ENCODE measurements at regions of chr22 and their contacts with region 1.

Region 1: DNA sequence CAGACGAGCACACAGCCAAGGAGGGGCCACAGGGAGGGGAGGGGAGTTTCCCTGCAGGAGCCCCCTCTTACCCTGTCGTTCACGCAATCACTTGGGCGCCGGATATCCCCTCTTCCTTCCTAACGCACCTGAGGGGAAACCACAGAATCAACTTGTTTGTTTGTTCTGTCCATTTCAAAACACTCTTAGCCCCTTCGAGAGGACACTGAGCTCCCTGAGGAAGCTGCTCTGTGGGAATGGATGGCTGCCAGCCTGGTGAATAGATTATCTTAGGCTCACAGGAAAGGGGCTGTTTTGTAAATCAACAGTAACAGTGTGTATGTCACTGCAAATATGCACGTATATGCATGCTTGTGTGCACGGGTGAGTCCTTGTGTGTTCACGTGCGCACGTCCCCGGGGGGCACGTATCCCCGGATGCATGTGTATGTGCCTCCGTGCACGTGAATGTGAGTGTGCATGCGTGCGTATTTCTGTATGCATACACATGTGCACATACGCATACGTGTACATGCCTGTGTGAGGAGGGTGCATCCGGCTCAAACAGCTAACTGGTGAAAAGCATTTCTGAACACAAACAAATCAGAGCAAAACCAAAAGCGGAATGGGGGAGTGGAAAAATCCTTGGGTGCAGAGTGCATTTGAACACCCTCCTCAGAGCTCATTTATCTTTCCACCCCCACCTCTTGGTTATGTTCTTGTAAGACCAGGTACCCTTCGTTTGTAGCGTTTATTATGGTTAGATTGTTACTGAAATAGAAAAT is 7.2 kb downstream of the ARSA start:
- DNase-seq: peak; percentile 78 to 96 (median 94)
- ATAC-seq: peak; percentile 71 to 73
- H3K4me3 Mint-ChIP-seq: peak overlapping the region; percentile 88 to 95 (median 92)
- H3K27ac Mint-ChIP-seq: peak overlapping the region; percentile 94 to 100 (median 98)
- H3K4me1 Mint-ChIP-seq: peaks cover 17 to 41% (median 38%) of the 10 kb centered on the region in 4 donors
- H3K27me3 Mint-ChIP-seq: no peaks in the 10 kb centered on the region

Region 2: GRCh38 chr22:50190182-50190940 is 430.4 kb before region 1 on chr22:
- POLR2A ChIA-PET with region 1: interaction called, 11 read pairs
- DNase-seq: peak; percentile 72 to 93 (median 82)
- ATAC-seq: peak; percentile 51
- H3K4me3 Mint-ChIP-seq: peak overlapping the region; percentile 85 to 95 (median 90)
- H3K27ac Mint-ChIP-seq: peak overlapping the region; percentile 94 to 100 (median 100)
- H3K4me1 Mint-ChIP-seq: peaks cover 18 to 62% (median 51%) of the 10 kb centered on the region in 4 donors
- H3K27me3 Mint-ChIP-seq: no peaks in the 10 kb centered on the region

Region 3: GRCh38 chr22:50250555-50251476 is 370.0 kb before region 1 on chr22 and contains the start of gene HDAC10:
- POLR2A ChIA-PET with region 1: interaction called, 23 read pairs
- DNase-seq: peak; percentile 59 to 87 (median 71)
- ATAC-seq: peak; percentile 72 to 82
- H3K4me3 Mint-ChIP-seq: peak within 1 kb of the TSS; percentile 60 to 87 (median 77)
- H3K27ac Mint-ChIP-seq: peak within 1 kb of the TSS; percentile 23 to 83 (median 62)
- H3K4me1 Mint-ChIP-seq: peaks cover 0 to 25% (median 7%) of the 10 kb centered on the region in 4 donors
- H3K27me3 Mint-ChIP-seq: no peaks in the 10 kb centered on the region
- polyA plus RNA-seq, gene HDAC10: 5.4 to 7.8 (median 6.4) TPM

Region 4: DNA sequence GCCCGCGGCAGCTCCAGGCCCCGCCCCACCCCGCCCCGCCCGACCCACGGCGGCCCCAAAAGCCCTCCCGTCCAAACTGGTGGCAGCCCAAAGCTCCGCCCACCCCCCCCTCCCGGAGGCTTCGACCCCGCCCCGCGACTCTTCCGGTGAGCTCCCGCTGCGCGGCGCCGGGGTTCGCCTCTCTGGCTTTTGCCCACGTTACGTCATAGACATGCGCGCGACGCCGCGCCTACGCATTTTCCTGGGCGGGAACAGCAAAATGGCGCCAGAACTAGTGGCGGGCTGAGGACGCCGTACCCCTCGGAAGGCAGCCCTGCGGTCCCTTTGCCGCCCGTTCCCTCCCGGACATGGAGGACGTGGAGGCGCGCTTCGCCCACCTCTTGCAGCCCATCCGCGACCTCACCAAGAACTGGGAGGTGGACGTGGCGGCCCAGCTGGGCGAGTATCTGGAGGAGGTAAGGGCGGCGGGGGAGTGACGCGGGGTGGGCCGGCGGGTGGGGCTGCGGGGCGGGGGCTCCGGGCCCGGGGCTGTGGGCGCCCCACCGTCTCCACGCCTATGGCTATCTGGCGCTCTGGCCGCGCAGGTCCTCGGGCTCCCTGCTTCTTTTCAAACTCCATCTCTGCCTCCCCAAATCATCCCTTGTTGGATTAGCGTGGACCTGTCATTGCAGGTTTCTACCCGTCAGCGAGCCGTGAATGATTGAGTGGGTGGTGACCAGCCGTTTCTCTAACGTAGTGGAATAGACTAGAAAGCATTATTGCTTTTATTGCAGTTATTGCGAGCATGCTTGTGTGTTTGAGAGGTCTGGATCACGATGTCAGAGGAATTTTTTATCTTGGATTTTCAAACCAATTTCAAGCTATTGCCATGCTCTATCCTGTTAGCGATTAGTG is 112.5 kb before region 1 on chr22 and contains the start of gene NCAPH2:
- POLR2A ChIA-PET with region 1: interaction called, 60 read pairs
- DNase-seq: peak in 8 of 10 donors; percentile 95 to 98 (median 97)
- ATAC-seq: peak; percentile 73 to 77
- H3K4me3 Mint-ChIP-seq: peak within 1 kb of the TSS; percentile 90 to 96 (median 94)
- H3K27ac Mint-ChIP-seq: peak within 1 kb of the TSS; percentile 85 to 100 (median 96)
- H3K4me1 Mint-ChIP-seq: peaks cover 2 to 25% (median 16%) of the 10 kb centered on the region in 4 donors
- H3K27me3 Mint-ChIP-seq: no peaks in the 10 kb centered on the region
- polyA plus RNA-seq, gene NCAPH2: 34.8 to 41.5 (median 40.1) TPM

Region 5: GRCh38 chr22:50537765-50538164 is 83.0 kb before region 1 on chr22:
- POLR2A ChIA-PET with region 1: interaction called, 25 read pairs
- DNase-seq: no peak
- ATAC-seq: no peak
- H3K4me3 Mint-ChIP-seq: peak overlapping the region in 4 of 10 donors; percentile 11 to 65 (median 34)
- H3K27ac Mint-ChIP-seq: peak overlapping the region; percentile 63 to 100 (median 86)
- H3K4me1 Mint-ChIP-seq: peaks cover 10 to 70% (median 22%) of the 10 kb centered on the region in 4 donors
- H3K27me3 Mint-ChIP-seq: peaks cover 0 to 4% (median 0%) of the 10 kb centered on the region in 5 donors

Region 6: DNA sequence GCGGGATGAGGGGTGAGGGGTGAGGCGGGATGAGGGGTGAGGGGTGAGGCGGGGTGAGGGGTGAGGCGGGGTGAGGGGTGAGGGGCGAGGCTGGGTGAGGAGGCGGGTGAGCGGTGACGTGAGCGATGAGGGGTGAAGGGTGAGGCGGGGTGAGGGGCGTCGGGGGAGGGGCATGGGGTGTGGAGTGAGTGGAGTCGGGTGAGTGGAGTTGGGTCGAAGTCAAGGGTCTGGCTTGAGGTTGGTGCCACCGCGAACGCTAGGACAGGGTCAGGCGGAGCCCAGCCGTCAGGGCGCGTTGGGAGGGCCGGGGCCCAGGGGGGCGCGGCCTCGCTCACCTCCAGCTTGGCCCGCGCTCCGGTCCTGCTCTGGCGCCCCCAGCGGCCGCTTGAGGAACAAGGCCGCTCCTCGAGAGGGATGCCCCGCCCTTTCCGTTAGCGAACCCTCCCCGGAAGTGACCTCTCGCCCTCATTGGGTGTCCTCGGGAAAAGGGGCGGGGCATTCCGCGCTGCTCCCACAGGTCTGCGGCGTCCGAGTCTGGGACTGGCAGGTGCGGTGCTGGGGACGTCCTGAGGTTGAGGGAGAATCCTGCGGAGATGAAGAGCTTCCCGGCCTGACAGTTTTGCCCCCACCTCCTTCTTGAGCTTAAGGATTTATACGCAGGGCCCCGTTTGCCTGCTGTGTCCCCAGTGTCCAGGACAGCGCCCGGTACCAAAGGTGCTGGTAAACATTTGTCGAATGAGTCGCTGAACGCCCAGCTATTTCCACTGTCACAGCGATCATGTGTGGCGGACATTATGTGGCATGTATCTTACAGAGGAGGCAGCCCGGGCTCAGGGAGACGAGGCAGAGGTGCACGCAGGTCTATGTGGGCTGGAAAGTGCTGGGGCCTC is 58.0 kb before region 1 on chr22 and contains the start of gene SYCE3:
- POLR2A ChIA-PET with region 1: interaction called, 20 read pairs
- DNase-seq: peak; percentile 93 to 99 (median 97)
- ATAC-seq: peak; percentile 95 to 98
- H3K4me3 Mint-ChIP-seq: peak within 1 kb of the TSS; percentile 91 to 98 (median 94)
- H3K27ac Mint-ChIP-seq: peak within 1 kb of the TSS; percentile 72 to 96 (median 91)
- H3K4me1 Mint-ChIP-seq: peaks cover 12 to 23% (median 17%) of the 10 kb centered on the region in 4 donors
- H3K27me3 Mint-ChIP-seq: no peaks in the 10 kb centered on the region
- polyA plus RNA-seq, gene SYCE3: not detected

Region 7: GRCh38 chr22:50641696-50642607 is 21.2 kb after region 1 on chr22:
- POLR2A ChIA-PET with region 1: interaction called, 11 read pairs
- DNase-seq: no peak
- ATAC-seq: peak in 1 of 2 donors; percentile 44
- H3K4me3 Mint-ChIP-seq: no peak overlapping the region
- H3K27ac Mint-ChIP-seq: peak overlapping the region in 2 of 10 donors; percentile 24 to 28
- H3K4me1 Mint-ChIP-seq: peaks cover 0 to 3% (median 0%) of the 10 kb centered on the region in 4 donors
- H3K27me3 Mint-ChIP-seq: peaks cover 0 to 19% (median 9%) of the 10 kb centered on the region in 5 donors

Measured in naive thymus-derived CD8-positive, alpha-beta T cell (primary cell).